ENCODE measurements at regions of chr6 and their contacts with region 1.

Region 1: GRCh38 chr6:43496370-43497128 is 13.6 kb downstream of the LRRC73 start:
- DNase-seq: peak; percentile 77 to 89 (median 86)
- ATAC-seq: peak; percentile 91
- H3K4me3 ChIP-seq: no peak overlapping the region
- H3K27ac ChIP-seq: no peak overlapping the region
- H3K4me1 ChIP-seq: peaks cover 16 to 28% of the 10 kb centered on the region in 2 experiments
- H3K27me3 ChIP-seq: no peaks in the 10 kb centered on the region
- CTCF ChIP-seq: peak; percentile 90 to 94 (median 94)
- EP300 ChIP-seq: no peak
- POLR2A ChIP-seq: no peak
- RAD21 ChIP-seq: peak; percentile 66 to 84

Region 2: DNA sequence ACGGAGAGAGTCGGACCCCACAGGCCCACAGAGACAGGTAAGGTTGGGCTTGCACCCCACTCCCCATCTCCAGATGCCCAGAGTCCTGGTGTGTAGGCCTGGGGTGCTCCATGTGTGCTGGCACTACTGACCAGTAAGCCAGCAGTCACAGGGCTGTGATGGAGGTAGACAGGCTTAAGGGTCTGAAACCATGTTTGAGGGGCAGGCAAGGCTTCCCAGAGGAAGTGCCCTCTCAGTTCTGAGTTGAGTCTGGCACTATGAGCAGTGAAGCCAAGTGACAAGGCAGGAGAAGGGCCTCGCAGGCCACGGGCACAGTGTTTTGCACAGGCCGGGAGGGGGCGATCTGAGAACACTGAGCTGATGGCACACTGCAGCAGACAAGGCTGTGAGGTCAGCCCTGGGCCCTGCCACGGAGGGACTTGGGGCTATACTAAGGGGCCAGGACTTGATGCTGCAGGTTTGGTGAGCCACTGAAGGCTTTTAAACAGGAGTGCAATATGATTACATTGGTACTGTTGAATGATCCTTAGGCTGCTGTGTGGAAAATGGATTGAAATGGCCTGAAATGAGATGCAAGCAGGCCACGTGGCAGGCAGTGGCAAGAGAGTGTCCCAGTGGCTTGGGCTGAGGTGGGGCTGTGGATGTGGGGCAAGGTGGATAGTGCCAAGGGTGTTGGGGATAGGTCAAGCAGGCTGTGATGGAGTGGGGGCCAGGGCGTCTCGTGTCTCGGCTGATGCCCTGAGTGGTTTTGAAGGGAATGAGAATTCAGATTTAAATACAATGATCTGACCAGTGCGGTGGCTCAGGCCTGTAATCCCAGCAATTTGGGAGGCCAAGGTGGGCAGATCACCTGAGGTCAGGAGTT is 233.0 kb before region 1 on chr6:
- CTCF ChIA-PET with region 1: interaction called, 4 read pairs
- POLR2A ChIA-PET with region 1: no interaction called
- in situ Hi-C with region 1: loop called (anchors 5 kb)
- intact Hi-C with region 1: no loop called
- DNase-seq: peak; percentile 79 to 89 (median 83)
- ATAC-seq: peak; percentile 94
- H3K4me3 ChIP-seq: no peak overlapping the region
- H3K27ac ChIP-seq: no peak overlapping the region
- H3K4me1 ChIP-seq: peaks cover 16 to 40% of the 10 kb centered on the region in 2 experiments
- H3K27me3 ChIP-seq: peaks cover 5 to 15% of the 10 kb centered on the region in 2 experiments; a peak in 3 of 5 replicates
- CTCF ChIP-seq: peak; percentile 94 to 98 (median 96)
- EP300 ChIP-seq: no peak
- POLR2A ChIP-seq: no peak
- RAD21 ChIP-seq: peak; percentile 94 to 97

Region 3: GRCh38 chr6:43454696-43455530 is 41.6 kb before region 1 on chr6:
- CTCF ChIA-PET with region 1: interaction called, 7 read pairs
- POLR2A ChIA-PET with region 1: no interaction called
- in situ Hi-C with region 1: no loop called
- intact Hi-C with region 1: loop called (anchors 1 kb)
- DNase-seq: peak; percentile 89 to 90 (median 90)
- ATAC-seq: peak; percentile 96
- H3K4me3 ChIP-seq: peak overlapping the region; percentile 53
- H3K27ac ChIP-seq: no peak overlapping the region
- H3K4me1 ChIP-seq: peaks cover 0 to 18% of the 10 kb centered on the region in 2 experiments; a peak in 4 of 5 replicates
- H3K27me3 ChIP-seq: no peaks in the 10 kb centered on the region; a peak in 1 of 5 replicates
- CTCF ChIP-seq: no peak; a peak in 1 of 6 replicates
- EP300 ChIP-seq: no peak
- POLR2A ChIP-seq: 0 out of 2 replicates have a peak, but pooled peaks have one; percentile 24
- RAD21 ChIP-seq: no peak; a peak in 1 of 4 replicates

Region 4: GRCh38 chr6:43769526-43770416 is 273.2 kb after region 1 on chr6 and contains the start of gene VEGFA:
- CTCF ChIA-PET with region 1: no interaction called
- POLR2A ChIA-PET with region 1: no interaction called
- in situ Hi-C with region 1: no loop called
- intact Hi-C with region 1: no loop called
- DNase-seq: peak; percentile 94 to 99 (median 98)
- ATAC-seq: peak; percentile 75
- H3K4me3 ChIP-seq: peak within 1 kb of the TSS; percentile 97
- H3K27ac ChIP-seq: peak within 1 kb of the TSS; percentile 91
- H3K4me1 ChIP-seq: peaks cover 18 to 58% of the 10 kb centered on the region in 2 experiments
- H3K27me3 ChIP-seq: no peaks in the 10 kb centered on the region
- CTCF ChIP-seq: peak; percentile 97 to 99 (median 97)
- EP300 ChIP-seq: no peak
- POLR2A ChIP-seq: peak; percentile 91
- RAD21 ChIP-seq: peak; percentile 97 to 99
- polyA plus RNA-seq, gene VEGFA: 14.0 to 16.0 TPM

Measured in K562 (cell line).